ENCODE measurements at regions of chr17 and their contacts with region 1.

Region 1: GRCh38 chr17:29369831-29370735 is 20.1 kb upstream of the TAOK1 start:
- DNase-seq: peak; percentile 54 to 69 (median 61)
- ATAC-seq: peak; percentile 95
- H3K4me3 ChIP-seq: no peak overlapping the region
- H3K27ac ChIP-seq: no peak overlapping the region
- H3K4me1 ChIP-seq: no peaks in the 10 kb centered on the region
- H3K27me3 ChIP-seq: no peaks in the 10 kb centered on the region
- CTCF ChIP-seq: peak; percentile 66 to 83 (median 80)
- EP300 ChIP-seq: no peak
- POLR2A ChIP-seq: no peak
- RAD21 ChIP-seq: peak; percentile 66 to 86

Region 2: DNA sequence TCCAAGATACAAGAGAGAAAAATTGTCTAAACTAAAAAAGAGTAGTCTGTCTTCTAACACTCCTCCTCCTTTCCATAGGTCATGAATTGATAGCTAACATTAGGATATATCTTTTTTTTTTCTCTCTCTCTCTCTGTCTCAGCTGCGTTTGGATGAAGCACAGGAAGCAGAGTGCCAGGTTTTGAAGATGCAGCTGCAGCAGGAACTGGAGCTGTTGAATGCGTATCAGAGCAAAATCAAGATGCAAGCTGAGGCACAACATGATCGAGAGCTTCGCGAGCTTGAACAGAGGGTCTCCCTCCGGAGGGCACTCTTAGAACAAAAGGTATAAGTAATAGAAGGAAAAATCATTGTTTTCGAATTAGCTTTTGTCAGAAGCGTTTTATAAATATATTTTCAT is 163.9 kb after region 1 on chr17:
- CTCF ChIA-PET with region 1: interaction called, 11 read pairs
- POLR2A ChIA-PET with region 1: no interaction called
- in situ Hi-C with region 1: no loop called
- intact Hi-C with region 1: loop called (anchors 2 kb)
- DNase-seq: no peak
- ATAC-seq: no peak
- H3K4me3 ChIP-seq: no peak overlapping the region
- H3K27ac ChIP-seq: no peak overlapping the region
- H3K4me1 ChIP-seq: no peaks in the 10 kb centered on the region
- H3K27me3 ChIP-seq: no peaks in the 10 kb centered on the region
- CTCF ChIP-seq: no peak
- EP300 ChIP-seq: no peak
- POLR2A ChIP-seq: no peak
- RAD21 ChIP-seq: no peak

Region 3: DNA sequence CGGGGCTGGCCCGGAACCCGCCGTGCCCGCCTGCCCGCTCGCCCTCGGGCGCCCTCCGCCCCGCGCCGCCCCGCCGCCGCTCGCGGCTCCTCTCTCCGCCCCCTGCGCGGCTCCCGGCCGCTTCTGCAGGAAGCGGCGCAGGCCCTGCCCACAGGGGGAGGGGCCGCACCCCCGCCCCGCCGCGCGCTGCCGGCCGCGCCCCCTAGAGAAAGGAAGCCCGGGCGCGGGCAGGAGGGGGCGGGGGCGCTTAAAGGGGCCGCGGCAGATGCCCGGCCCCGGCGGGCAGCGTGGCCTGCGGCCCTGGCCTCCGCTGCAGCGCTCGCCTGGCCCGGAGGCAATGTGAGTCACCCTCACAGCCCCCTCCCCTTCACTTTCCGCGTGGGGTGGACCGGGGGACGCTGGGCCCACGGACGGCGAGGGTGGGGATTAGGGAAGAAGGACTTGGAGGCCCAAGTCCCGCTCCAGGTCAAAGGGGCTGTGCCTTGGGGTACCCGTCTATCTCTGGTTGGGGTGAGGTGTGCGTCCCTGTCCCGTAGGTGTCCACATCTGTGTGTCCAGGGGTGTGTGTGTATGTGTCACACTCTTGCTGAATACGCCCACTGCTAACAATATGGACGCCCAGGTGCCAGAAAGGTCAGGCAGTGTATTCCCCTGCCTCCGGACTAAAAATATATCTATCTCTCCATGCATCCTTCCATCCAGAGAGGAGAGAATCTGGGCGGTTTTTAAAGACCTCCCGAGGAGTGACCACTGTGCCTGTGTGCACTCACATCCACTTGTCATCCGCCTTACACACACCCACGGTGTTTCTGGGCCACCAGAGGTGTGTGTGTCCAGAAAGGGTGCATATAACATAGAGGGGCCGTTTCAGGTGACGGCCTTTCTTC is 219.7 kb after region 1 on chr17 and contains the start of gene GIT1:
- CTCF ChIA-PET with region 1: interaction called, 19 read pairs
- POLR2A ChIA-PET with region 1: no interaction called
- in situ Hi-C with region 1: no loop called
- intact Hi-C with region 1: loop called (anchors 2 kb)
- DNase-seq: peak; percentile 89 to 96 (median 90)
- ATAC-seq: peak; percentile 80
- H3K4me3 ChIP-seq: peak within 1 kb of the TSS; percentile 56
- H3K27ac ChIP-seq: peak within 1 kb of the TSS; percentile 62
- H3K4me1 ChIP-seq: peaks cover 38 to 78% of the 10 kb centered on the region in 2 experiments
- H3K27me3 ChIP-seq: no peaks in the 10 kb centered on the region
- CTCF ChIP-seq: 0 out of 6 replicates have a peak, but pooled peaks of 1 of the 3 experiments have one; percentile 10
- EP300 ChIP-seq: no peak
- POLR2A ChIP-seq: no peak
- RAD21 ChIP-seq: no peak
- polyA plus RNA-seq, gene GIT1: 0.35 to 0.38 TPM

Measured in K562 (cell line).